Left cardiac atrium (tissue), 4 donors: ENCODE measurements at regions of chr1 and their contacts with region 1.

Region 1: GRCh38 chr1:30801771-30802198 is 44.2 kb upstream of the LAPTM5 start:
- DNase-seq: peak; percentile 83
- ATAC-seq: peak; percentile 38 to 66

Region 2: DNA sequence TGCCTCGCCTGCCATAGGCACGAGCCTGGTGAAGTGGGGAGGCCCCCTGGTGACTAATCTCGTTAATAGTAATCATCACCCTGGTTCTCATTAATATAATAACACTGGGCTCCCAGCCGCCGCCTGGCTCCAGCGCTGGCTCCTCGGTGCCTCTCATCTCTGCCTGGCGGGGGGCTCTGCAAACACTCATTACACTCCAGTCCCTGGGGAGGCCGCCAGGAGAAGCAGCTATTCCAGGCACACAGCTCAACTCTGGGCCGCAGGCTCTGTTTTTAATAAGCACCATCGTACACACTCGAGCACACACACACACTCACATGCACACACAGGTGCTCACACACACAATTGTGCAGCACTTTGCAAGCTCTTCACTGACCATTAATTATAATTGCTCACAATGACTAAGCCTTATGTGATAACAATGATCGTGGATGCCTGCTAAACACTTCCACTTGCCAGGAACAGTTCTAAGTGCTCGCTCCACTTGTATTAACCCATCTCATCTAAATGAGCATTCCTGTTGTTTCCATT is 54.5 kb after region 1 on chr1:
- intact Hi-C with region 1: loop called in 1 of 2 experiments (anchors 5 kb)
- DNase-seq: no peak
- ATAC-seq: no peak